Calu3 (cell line): ENCODE measurements at regions of chr1 and their contacts with region 1.

Region 1: DNA sequence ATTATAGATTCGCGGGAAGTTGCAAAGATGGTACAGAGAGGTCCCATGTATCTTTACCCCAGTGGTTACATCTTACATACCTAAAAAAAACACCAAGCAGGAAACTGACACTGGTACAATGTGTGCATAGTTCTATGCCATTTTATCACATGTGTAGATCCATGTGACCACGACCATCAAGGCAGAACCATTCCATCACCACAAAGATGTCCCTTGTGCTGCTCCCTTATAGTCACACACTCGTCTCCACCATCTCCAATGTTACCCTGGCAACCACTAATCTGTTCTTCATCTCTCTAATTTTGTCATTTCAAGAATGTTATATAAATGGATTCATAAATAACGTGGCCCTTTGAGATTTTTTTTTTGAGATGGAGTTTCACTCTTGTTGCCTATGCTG is 156.9 kb upstream of the MAGI3 start:
- DNase-seq: no peak
- H3K4me3 Mint-ChIP-seq: no peak overlapping the region
- H3K27ac Mint-ChIP-seq: no peak overlapping the region
- H3K4me1 Mint-ChIP-seq: no peaks in the 10 kb centered on the region
- H3K27me3 Mint-ChIP-seq: no peaks in the 10 kb centered on the region
- CTCF ChIP-seq: no peak

Region 2: GRCh38 chr1:113140588-113141446 is 92.6 kb before region 1 on chr1:
- CTCF ChIA-PET with region 1: no interaction called
- intact Hi-C with region 1: loop called (anchors 10 kb)
- DNase-seq: peak; percentile 56
- H3K4me3 Mint-ChIP-seq: no peak overlapping the region
- H3K27ac Mint-ChIP-seq: no peak overlapping the region
- H3K4me1 Mint-ChIP-seq: peaks cover 13% of the 10 kb centered on the region
- H3K27me3 Mint-ChIP-seq: no peaks in the 10 kb centered on the region
- CTCF ChIP-seq: peak; percentile 68

Region 3: GRCh38 chr1:113199760-113200455 is 33.5 kb before region 1 on chr1:
- CTCF ChIA-PET with region 1: no interaction called
- intact Hi-C with region 1: no loop called
- DNase-seq: no peak
- H3K4me3 Mint-ChIP-seq: no peak overlapping the region
- H3K27ac Mint-ChIP-seq: no peak overlapping the region
- H3K4me1 Mint-ChIP-seq: no peaks in the 10 kb centered on the region
- H3K27me3 Mint-ChIP-seq: no peaks in the 10 kb centered on the region
- CTCF ChIP-seq: no peak

Region 4: GRCh38 chr1:113255720-113256347 is 22.4 kb after region 1 on chr1:
- CTCF ChIA-PET with region 1: no interaction called
- intact Hi-C with region 1: no loop called
- DNase-seq: peak; percentile 55
- H3K4me3 Mint-ChIP-seq: peak overlapping the region; percentile 63
- H3K27ac Mint-ChIP-seq: peak overlapping the region; percentile 72
- H3K4me1 Mint-ChIP-seq: peaks cover 27% of the 10 kb centered on the region
- H3K27me3 Mint-ChIP-seq: no peaks in the 10 kb centered on the region
- CTCF ChIP-seq: no peak

Region 5: GRCh38 chr1:113333056-113333455 is 99.6 kb after region 1 on chr1:
- CTCF ChIA-PET with region 1: no interaction called
- intact Hi-C with region 1: no loop called
- DNase-seq: no peak
- H3K4me3 Mint-ChIP-seq: no peak overlapping the region
- H3K27ac Mint-ChIP-seq: no peak overlapping the region
- H3K4me1 Mint-ChIP-seq: no peaks in the 10 kb centered on the region
- H3K27me3 Mint-ChIP-seq: no peaks in the 10 kb centered on the region
- CTCF ChIP-seq: no peak